Mammary epithelial cell (primary cell): ENCODE measurements at regions of chr14 and their contacts with region 1.

Region 1: DNA sequence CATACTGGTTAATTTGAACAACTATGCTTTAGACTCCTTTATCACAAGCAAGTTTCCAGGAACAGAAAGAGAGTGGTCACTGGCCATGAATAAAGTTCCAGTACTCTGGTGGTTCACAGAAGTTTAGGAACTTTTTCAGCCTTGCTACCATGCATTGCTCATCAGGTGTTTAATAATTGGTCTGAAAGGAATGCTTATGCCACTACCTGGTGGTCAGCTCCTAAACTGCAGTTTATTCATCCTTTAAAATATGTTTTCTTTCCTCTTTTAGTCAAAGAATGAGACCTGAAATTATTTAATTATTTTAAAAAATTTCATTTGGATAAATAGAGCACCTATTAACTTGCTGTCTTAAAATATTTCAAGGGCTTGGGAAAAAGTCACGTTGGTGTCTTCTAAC is 260.1 kb upstream of the OR4E1 start:
- DNase-seq: no peak
- H3K4me3 ChIP-seq: no peak overlapping the region
- H3K27ac ChIP-seq: no peak overlapping the region
- H3K4me1 ChIP-seq: no peaks in the 10 kb centered on the region
- H3K27me3 ChIP-seq: no peaks in the 10 kb centered on the region
- CTCF ChIP-seq: peak; percentile 43 to 45

Region 2: GRCh38 chr14:21868442-21869046 is 65.1 kb before region 1 on chr14:
- CTCF ChIA-PET with region 1: no interaction called
- dilution Hi-C with region 1: no loop called
- in situ Hi-C with region 1: no loop called
- intact Hi-C with region 1: loop called (anchors 1 kb)
- DNase-seq: peak; percentile 73
- H3K4me3 ChIP-seq: no peak overlapping the region
- H3K27ac ChIP-seq: no peak overlapping the region
- H3K4me1 ChIP-seq: peaks cover 26% of the 10 kb centered on the region
- H3K27me3 ChIP-seq: no peaks in the 10 kb centered on the region
- CTCF ChIP-seq: peak; percentile 91 to 93